ENCODE measurements at regions of chr10 and their contacts with region 1.

Region 1: DNA sequence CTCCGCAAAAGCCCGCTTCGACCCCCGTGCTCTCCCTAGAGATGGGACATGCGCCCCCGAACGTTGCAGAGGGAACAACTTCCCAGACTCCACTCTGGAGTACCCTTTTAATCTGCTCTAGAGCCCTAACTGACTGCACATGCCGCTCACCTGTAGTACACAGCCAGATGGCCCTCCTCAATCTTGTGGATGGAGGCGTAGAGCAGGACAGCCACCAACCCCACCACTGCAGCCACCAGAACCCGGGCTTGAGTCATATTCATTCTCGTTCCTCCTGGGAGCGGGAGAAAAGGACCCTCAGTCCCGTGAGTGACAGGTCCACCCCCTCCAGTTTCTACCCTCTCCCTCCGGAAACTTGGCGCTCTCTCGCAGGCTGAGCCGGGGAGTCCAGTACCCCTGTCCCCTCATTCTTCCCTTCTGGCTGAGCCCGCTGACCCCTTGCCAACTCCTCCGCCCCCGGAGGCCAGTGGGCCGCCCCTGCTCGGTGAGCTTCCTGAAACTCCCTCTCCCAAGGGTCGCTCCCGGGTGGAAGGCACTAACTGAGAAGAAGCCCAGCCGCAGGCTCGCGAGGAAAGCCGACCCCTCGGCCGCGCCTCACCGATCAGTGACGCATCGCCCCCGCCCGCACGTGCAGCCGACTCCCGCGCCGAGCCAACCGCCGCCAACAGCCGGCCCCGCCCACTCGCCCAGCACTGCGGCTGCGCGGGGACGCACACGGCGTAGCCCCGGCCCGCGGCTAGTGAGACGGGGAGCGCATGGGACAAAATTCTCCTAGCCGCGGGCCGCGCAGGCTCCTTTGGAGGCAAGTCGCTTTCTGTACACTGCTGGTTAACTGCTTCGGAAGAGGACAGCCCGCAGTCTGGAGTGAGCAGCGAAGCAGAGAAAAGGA is at the start of gene ERLIN1:
- DNase-seq: peak; percentile 96
- CTCF ChIP-seq: no peak

Region 2: GRCh38 chr10:100174699-100175677 is 10.6 kb before region 1 on chr10:
- CTCF ChIA-PET with region 1: interaction called, 15 read pairs
- POLR2A ChIA-PET with region 1: no interaction called
- DNase-seq: peak; percentile 32
- CTCF ChIP-seq: no peak

Region 3: DNA sequence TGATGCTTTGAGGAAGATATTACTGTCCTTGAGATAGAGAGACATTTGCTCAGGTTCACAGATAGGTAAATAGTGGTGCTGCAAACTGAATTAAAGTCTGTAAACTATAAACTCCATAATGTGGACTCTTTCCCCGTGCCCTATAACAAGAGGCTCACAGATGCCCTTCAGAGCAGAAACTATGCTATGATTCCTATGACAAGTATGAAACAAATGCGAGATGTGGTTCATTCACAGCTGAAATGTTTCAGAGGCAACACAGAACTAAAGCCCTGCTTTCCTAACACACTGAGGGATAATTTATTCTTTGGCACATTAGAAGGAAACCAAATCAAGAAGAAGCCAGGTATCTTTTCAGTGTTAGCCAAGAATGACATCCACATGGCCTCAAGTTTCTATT is 30.4 kb after region 1 on chr10:
- CTCF ChIA-PET with region 1: no interaction called
- POLR2A ChIA-PET with region 1: no interaction called
- DNase-seq: no peak
- CTCF ChIP-seq: no peak

Measured in GM10248 (cell line).